PC-9 (cell line): ENCODE measurements at regions of chr11 and their contacts with region 1.

Region 1: GRCh38 chr11:127859941-127860354 is 727.4 kb downstream of the ETS1 start:
- DNase-seq: peak in 1 of 2 experiments; percentile 62
- H3K4me3 ChIP-seq: no peak overlapping the region
- H3K27ac ChIP-seq: no peak overlapping the region
- H3K4me1 ChIP-seq: no peaks in the 10 kb centered on the region
- H3K27me3 ChIP-seq: no peaks in the 10 kb centered on the region
- CTCF ChIP-seq: no peak

Region 2: GRCh38 chr11:128026596-128026995 is 166.6 kb after region 1 on chr11:
- CTCF ChIA-PET with region 1: no interaction called
- POLR2A ChIA-PET with region 1: no interaction called
- intact Hi-C with region 1: loop called (anchors 1 kb)
- DNase-seq: peak; percentile 57 to 83
- H3K4me3 ChIP-seq: no peak overlapping the region
- H3K27ac ChIP-seq: no peak overlapping the region
- H3K4me1 ChIP-seq: peaks cover 8% of the 10 kb centered on the region; the same call in 1 of the 2 replicates
- H3K27me3 ChIP-seq: no peaks in the 10 kb centered on the region
- CTCF ChIP-seq: no peak

Region 3: GRCh38 chr11:128146926-128147605 is 287.1 kb after region 1 on chr11:
- CTCF ChIA-PET with region 1: no interaction called
- POLR2A ChIA-PET with region 1: no interaction called
- intact Hi-C with region 1: loop called (anchors 5 kb)
- DNase-seq: peak; percentile 18 to 79
- H3K4me3 ChIP-seq: no peak overlapping the region
- H3K27ac ChIP-seq: peak overlapping the region; percentile 43
- H3K4me1 ChIP-seq: peaks cover 14% of the 10 kb centered on the region
- H3K27me3 ChIP-seq: no peaks in the 10 kb centered on the region
- CTCF ChIP-seq: no peak